ENCODE measurements at regions of chr3 and their contacts with region 1.

Region 1: DNA sequence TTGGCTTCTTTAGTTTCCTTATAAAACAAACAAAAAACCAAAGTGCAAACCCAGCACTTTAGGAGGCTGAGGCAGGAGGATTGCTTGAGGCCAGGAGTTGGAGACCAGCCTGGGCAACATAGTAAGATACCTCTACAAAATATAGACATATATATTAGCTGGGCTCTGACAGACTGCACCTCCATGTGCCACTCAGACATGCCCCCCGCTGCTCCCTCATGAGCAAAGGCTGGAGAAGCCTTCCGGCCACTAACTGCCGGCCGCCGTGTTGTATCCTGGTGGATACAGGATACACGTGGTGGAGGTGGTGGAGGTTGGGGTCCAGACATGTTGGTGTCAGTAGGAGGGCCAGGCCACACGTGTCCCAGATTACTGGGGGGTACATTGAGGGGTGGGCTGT is 29.4 kb upstream of the CCR4 start:
- DNase-seq: no peak
- H3K4me3 ChIP-seq: no peak overlapping the region
- H3K4me3 Mint-ChIP-seq: no peak overlapping the region
- H3K27ac Mint-ChIP-seq: no peak overlapping the region
- H3K4me1 ChIP-seq: no peaks in the 10 kb centered on the region
- H3K4me1 Mint-ChIP-seq: no peaks in the 10 kb centered on the region
- H3K27me3 ChIP-seq: no peaks in the 10 kb centered on the region
- H3K27me3 Mint-ChIP-seq: no peaks in the 10 kb centered on the region
- CTCF ChIP-seq: no peak

Region 2: GRCh38 chr3:32992322-32992692 is 70.2 kb after region 1 on chr3:
- CTCF ChIA-PET with region 1: no interaction called
- POLR2A ChIA-PET with region 1: interaction called, 10 read pairs
- intact Hi-C with region 1: no loop called
- DNase-seq: no peak
- H3K4me3 ChIP-seq: no peak overlapping the region
- H3K4me3 Mint-ChIP-seq: no peak overlapping the region
- H3K27ac Mint-ChIP-seq: no peak overlapping the region
- H3K4me1 ChIP-seq: no peaks in the 10 kb centered on the region
- H3K4me1 Mint-ChIP-seq: no peaks in the 10 kb centered on the region
- H3K27me3 ChIP-seq: no peaks in the 10 kb centered on the region
- H3K27me3 Mint-ChIP-seq: no peaks in the 10 kb centered on the region
- CTCF ChIP-seq: no peak